Cardiac septum (tissue), 1 donor: ENCODE measurements at regions of chr22 and their contacts with region 1.

Region 1: DNA sequence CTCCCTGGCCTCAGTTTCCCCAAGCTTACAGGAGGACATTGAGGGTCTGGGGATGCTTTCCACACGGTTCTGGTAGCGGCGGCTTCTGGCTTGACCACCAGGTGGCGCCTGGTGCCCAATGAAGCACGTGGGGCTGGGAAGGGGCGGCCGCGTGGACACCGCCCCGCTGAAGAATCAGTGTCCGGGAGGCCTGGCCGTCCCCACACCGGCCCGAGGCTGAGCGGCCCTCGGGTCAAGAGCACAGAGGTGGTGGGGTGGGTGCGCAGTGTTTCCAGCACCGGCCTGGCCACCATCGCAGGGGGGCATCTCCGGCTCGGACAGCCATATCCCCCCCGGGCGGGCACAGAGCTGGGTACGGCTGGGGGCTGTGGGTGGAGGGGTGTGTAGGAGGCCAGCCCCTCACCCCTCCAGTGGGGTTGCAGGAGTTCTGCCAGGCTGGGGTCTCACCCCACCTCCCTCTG is 27.8 kb upstream of the PPARA start:
- DNase-seq: peak; percentile 88

Region 2: GRCh38 chr22:46296257-46297150 is 174.0 kb after region 1 on chr22 and contains the start of gene GTSE1:
- intact Hi-C with region 1: loop called (anchors 5 kb)
- DNase-seq: peak; percentile 98
- total RNA-seq, gene GTSE1: 0.32 TPM

Region 3: DNA sequence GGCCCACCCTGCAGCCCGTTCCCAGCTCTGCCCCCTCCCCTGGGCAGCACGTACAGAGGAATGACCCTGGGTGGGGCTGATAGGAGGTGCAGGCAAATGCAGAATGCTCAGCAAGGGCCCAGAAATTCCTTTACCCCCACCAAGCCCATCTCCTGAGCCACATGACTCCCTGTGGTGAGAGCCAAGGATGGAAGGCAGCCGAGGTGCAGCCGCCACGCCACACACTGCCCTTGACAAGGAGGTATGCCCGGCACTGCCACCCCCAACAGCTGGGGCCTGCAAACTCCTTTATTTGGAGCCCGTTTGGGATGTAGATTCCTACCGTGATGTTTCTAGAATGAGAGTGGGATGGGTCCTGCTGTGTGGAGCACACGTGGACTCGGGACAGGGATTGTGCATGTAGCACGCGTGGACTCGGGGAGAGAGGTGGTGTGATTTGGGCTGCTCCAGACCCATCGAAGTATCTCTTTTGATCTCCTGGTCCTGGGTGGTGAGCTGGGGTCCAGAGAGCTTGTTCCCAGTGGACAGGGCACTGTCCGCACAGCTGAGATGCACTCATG is 187.1 kb after region 1 on chr22:
- intact Hi-C with region 1: loop called (anchors 1 kb)
- DNase-seq: no peak